ENCODE measurements at regions of chr3 and their contacts with region 1.

Region 1: GRCh38 chr3:72475258-72476138 is 372.7 kb downstream of the SHQ1 start:
- DNase-seq: no peak
- H3K4me3 Mint-ChIP-seq: peak overlapping the region; percentile 45
- H3K27ac Mint-ChIP-seq: peak overlapping the region; percentile 78
- H3K4me1 Mint-ChIP-seq: peaks cover 32% of the 10 kb centered on the region
- H3K27me3 Mint-ChIP-seq: no peaks in the 10 kb centered on the region

Region 2: DNA sequence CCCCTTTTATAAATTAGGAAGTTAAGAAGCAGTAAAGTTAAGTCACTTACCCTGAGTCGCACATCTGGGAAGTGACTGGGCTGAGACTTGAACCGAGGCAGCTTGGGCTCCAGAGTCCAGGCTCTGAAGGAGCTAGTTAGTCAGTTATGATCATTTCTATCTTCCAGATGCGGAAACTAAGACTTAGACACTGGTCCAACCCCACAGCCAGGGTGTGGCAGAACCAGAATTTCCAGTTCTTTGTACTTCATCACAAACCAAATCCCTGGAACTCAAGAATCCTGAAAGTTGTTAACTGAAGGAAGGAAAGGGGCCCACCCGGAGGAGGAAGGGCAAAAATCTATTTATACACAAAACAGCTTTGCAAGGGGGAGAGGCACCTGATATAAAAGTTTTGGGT is 17.1 kb before region 1 on chr3:
- intact Hi-C with region 1: loop called (anchors 1 kb)
- DNase-seq: no peak
- H3K4me3 Mint-ChIP-seq: no peak overlapping the region
- H3K27ac Mint-ChIP-seq: no peak overlapping the region
- H3K4me1 Mint-ChIP-seq: peaks cover 20% of the 10 kb centered on the region
- H3K27me3 Mint-ChIP-seq: no peaks in the 10 kb centered on the region

Region 3: GRCh38 chr3:72549761-72550581 is 74.5 kb after region 1 on chr3:
- intact Hi-C with region 1: no loop called
- DNase-seq: peak; percentile 76
- H3K4me3 Mint-ChIP-seq: peak overlapping the region; percentile 83
- H3K27ac Mint-ChIP-seq: peak overlapping the region; percentile 94
- H3K4me1 Mint-ChIP-seq: peaks cover 18% of the 10 kb centered on the region
- H3K27me3 Mint-ChIP-seq: no peaks in the 10 kb centered on the region

Measured in activated CD4-positive, alpha-beta T cell treated with anti-CD3 and anti-CD28 coated beads, Interleukin-2, amount 10 ng/mL, durations not matched to agents 24 days and 14 days (primary cell).